Activated CD4-positive, alpha-beta T cell treated with anti-CD3 and anti-CD28 coated beads for 36 hours (primary cell): ENCODE measurements at regions of chr3 and their contacts with region 1.

Region 1: DNA sequence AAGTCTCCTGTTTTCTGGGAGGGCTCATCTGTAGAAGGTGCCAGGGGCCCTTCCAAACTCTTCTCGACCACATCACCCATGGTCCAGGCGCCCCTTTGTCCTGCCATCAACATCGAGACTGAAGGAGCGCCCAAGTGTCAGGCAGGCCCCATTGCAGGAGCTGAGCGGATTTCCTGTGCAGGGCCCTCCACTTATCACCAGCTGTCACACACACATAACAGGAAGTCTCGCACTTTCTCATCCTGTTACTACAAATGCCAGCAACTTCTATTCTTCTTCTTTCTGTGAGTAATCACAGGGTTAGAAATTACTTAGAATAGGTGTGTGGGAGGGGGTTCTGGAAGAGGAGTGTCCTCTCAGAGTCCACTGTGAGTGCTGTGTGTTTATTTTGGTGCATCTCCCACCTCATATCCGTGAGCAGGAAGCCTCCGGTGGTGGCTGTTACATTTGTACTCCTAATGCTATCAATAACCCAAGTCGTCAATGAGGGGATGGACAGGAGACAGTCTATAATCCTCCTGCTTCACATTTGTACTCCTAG is at the start of gene KLHL6:
- DNase-seq: peak; percentile 89
- ATAC-seq: peak; percentile 85
- H3K4me3 Mint-ChIP-seq: peak within 1 kb of the TSS; percentile 97
- H3K27ac Mint-ChIP-seq: peak within 1 kb of the TSS; percentile 100
- H3K4me1 Mint-ChIP-seq: peaks cover 47% of the 10 kb centered on the region
- H3K27me3 Mint-ChIP-seq: no peaks in the 10 kb centered on the region
- total RNA-seq, gene KLHL6: 62.8 to 64.7 TPM

Region 2: DNA sequence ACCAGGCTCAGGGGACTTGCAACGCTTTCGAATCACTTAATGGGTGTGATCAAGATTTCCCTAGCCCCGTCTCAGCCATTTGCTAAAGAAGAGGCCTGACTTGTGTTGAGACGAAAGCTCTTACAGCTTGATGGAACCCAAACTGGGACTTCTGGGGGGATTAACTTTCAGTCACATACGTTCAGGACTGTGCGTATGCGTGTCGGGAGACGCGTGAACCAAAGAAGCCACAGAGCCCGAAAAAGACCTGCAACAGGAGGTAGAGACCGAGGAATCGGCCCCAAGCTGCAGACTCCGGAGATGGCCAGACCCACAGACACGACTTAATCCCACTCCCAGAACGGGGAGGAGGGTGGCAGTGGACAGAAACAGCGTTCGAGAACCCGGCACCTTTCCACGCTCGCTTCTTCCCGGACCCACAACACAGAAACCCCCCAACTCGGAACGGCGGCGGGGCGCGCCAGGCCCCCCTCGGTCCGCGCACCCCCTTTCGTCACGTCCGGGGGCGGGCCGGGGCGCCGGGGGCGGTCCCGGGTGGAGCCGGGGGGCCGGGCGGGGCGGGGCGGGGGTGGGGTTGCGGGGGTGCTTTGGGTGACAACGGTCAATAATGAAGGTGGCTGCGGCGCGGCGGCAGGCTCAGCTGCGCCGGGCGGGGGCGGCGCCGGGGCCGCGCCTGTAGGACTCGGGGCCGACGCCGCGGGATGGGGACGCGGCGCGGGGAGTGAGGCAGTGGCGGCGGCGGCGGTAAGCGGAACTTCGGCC is 762.5 kb before region 1 on chr3 and contains the start of gene ATP11B:
- CTCF ChIA-PET with region 1: no interaction called
- POLR2A ChIA-PET with region 1: no interaction called
- intact Hi-C with region 1: loop called in 1 of 2 experiments (anchors 5 kb)
- DNase-seq: peak; percentile 85
- ATAC-seq: peak; percentile 43
- H3K4me3 Mint-ChIP-seq: peak within 1 kb of the TSS; percentile 96
- H3K27ac Mint-ChIP-seq: peak within 1 kb of the TSS; percentile 99
- H3K4me1 Mint-ChIP-seq: peaks cover 27% of the 10 kb centered on the region
- H3K27me3 Mint-ChIP-seq: no peaks in the 10 kb centered on the region
- total RNA-seq, gene ATP11B: 64.6 to 86.7 TPM

Region 3: DNA sequence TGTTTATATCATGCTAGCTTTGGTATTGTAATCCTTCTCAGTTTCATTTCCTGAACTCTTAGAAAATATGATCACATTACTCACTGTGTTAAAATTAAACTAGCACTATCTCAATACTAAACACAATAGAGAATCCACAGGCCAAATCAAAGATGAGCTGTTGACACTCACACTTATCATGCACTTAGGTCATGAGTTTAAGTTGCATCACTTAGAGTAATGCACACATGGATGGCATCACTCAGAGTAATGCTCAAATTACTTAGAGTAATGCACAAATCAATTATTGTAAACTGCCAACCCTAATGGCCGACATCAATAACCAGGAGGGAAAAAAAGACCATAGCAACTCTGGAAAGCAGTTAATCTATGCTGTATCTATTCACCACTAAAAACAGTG is 87.2 kb before region 1 on chr3:
- CTCF ChIA-PET with region 1: interaction called, 7 read pairs
- POLR2A ChIA-PET with region 1: no interaction called
- intact Hi-C with region 1: loop called (anchors 1 kb)
- DNase-seq: no peak
- ATAC-seq: peak; percentile 77
- H3K4me3 Mint-ChIP-seq: no peak overlapping the region
- H3K27ac Mint-ChIP-seq: peak overlapping the region; percentile 84
- H3K4me1 Mint-ChIP-seq: peaks cover 26% of the 10 kb centered on the region
- H3K27me3 Mint-ChIP-seq: no peaks in the 10 kb centered on the region

Region 4: DNA sequence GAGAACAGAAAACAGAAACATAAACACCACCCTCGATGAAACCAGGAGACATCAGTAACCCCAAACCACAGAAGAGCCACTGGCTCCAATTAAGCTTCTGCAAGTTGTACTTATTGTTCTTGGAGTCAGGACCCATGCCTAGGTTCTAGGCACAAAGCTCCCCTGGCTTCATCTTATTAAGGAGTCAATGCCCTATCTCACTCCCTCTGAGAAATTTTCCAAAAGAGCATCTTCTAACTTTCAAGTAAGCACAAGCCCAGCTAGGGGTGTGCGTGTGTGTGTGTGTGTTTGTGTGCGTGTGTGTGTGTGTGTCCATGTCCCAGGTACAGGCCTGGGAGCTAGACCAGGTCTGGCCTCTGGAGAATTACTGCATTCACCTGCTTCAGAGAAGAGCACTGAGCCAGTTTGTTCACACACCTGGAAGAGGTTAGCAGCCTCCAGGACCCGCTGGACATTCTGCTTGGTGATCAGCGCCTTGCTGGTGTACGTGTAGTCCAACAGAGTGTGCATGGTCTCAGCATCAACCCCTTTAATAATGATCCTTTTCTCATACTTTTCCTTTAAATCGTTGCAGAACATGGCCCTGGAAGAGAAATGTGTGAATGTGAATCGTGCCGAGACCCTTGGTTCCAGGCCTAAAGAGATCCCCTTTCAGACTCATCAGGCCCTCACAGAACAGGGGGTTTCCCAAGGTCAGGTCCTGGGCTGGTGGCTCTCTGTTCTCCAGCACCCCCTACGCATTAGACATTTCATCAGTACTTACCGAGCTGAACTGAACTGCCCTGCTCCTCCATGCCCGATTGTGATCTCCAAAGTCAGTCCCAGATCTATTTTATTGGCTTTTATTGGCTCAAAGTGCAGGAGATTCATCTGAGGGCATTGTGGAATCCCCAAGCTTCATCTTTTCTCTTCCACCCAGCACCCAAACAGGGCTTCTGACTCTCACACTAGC is 27.9 kb before region 1 on chr3:
- CTCF ChIA-PET with region 1: interaction called, 5 read pairs
- POLR2A ChIA-PET with region 1: interaction called, 5 read pairs
- intact Hi-C with region 1: loop called in 1 of 2 experiments (anchors 1 kb)
- DNase-seq: peak; percentile 36
- ATAC-seq: peak; percentile 82
- H3K4me3 Mint-ChIP-seq: peak overlapping the region; percentile 39
- H3K27ac Mint-ChIP-seq: peak overlapping the region; percentile 87
- H3K4me1 Mint-ChIP-seq: peaks cover 63% of the 10 kb centered on the region
- H3K27me3 Mint-ChIP-seq: no peaks in the 10 kb centered on the region

Region 5: GRCh38 chr3:183576487-183577107 is 21.0 kb after region 1 on chr3:
- CTCF ChIA-PET with region 1: no interaction called
- POLR2A ChIA-PET with region 1: no interaction called
- intact Hi-C with region 1: no loop called
- DNase-seq: no peak
- ATAC-seq: no peak
- H3K4me3 Mint-ChIP-seq: no peak overlapping the region
- H3K27ac Mint-ChIP-seq: no peak overlapping the region
- H3K4me1 Mint-ChIP-seq: peaks cover 20% of the 10 kb centered on the region
- H3K27me3 Mint-ChIP-seq: no peaks in the 10 kb centered on the region

Region 6: DNA sequence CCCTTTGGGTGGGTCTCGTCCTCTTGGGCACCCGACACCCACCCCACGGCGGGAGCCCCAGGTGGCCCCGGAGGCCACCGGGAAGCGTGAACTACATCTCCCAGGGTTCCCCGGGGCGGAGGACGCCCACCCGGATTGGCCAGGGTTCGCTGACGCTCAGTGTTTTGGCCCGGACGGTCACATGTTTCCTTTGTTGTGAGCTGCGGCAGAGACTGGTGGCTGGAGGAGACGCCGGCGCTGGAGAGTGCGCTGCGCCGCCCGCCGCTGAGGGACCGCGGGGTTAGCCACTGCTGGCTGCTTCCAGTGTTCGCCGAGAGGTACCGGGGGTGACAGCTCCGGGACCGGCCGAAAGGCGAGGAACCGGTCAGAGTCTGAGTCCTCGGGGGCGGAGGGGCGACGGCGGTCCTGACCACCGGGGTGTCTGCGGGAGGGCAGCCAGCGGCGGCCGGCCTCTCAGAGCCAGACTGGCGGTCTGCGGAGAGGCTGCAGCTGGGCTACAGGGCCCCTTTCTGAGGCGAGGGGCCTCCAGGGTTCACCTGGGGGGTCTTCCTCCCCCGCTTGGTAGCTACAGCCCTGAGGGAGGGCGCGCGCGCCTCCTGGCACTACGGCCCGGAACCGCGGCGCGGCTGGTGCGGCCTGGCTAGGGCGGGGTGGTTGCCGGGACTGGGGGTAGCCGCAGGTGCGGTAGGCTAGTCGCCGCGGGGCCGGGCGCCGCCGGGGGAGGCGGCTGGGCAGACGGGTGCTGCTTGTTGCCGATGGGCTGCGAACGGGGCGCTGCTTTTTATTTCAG is 80.0 kb after region 1 on chr3 and contains the start of gene KLHL24:
- CTCF ChIA-PET with region 1: interaction called, 5 read pairs
- POLR2A ChIA-PET with region 1: interaction called, 11 read pairs
- intact Hi-C with region 1: loop called (anchors 1 kb)
- DNase-seq: peak; percentile 95
- ATAC-seq: peak; percentile 85
- H3K4me3 Mint-ChIP-seq: peak within 1 kb of the TSS; percentile 87
- H3K27ac Mint-ChIP-seq: peak within 1 kb of the TSS; percentile 92
- H3K4me1 Mint-ChIP-seq: peaks cover 36% of the 10 kb centered on the region
- H3K27me3 Mint-ChIP-seq: no peaks in the 10 kb centered on the region
- total RNA-seq, gene KLHL24: 9.6 to 15.8 TPM

Region 7: DNA sequence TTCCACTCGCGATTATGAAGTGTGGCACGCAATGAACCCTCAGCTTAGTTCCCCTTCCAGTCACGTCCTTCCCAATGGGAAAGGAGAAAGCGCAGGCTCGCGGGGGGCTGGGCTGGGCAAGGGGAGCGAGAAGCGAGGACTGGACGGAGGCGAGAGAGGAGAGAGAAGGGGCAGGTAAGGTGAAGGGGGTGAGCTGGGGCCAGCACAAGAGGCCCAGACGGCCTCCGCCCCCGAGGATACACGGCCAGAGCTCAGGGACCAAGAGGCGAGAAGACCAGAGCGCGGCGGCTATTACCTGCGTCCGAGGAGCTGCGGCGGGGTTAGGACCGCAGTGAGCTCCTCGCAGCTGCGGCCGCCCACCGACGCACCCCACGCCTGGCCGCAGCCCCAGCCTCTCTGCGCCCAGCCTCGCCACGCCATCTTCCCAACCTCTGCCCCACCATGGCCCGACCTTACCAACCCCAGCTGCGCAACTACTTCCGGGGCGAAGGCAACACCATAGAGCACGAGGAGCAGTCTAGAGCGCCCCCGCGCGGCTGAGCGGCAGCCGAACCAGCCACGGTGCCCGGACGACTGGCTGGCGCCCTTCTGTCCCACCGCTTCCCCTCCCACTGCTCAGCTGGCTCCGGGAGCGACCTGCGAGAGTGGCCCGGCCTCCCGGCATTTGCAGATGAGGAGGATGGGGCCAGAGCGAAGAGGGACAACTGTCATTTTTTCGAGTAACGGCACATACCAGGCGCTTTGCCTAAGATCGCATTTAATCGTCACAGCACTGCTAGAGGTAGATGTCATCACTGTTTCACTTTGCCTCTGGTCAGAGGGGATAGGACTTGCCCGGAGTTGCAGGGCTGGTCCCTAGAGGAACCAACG is 329.1 kb after region 1 on chr3 and contains the start of gene PARL:
- CTCF ChIA-PET with region 1: no interaction called
- POLR2A ChIA-PET with region 1: no interaction called
- intact Hi-C with region 1: loop called (anchors 2 to 10 kb)
- DNase-seq: peak; percentile 98
- ATAC-seq: peak; percentile 100
- H3K4me3 Mint-ChIP-seq: peak within 1 kb of the TSS; percentile 94
- H3K27ac Mint-ChIP-seq: peak within 1 kb of the TSS; percentile 94
- H3K4me1 Mint-ChIP-seq: peaks cover 32% of the 10 kb centered on the region
- H3K27me3 Mint-ChIP-seq: no peaks in the 10 kb centered on the region
- total RNA-seq, gene PARL: 55.9 to 91.9 TPM